Activated CD4-positive, alpha-beta T cell treated with anti-CD3 and anti-CD28 coated beads, Interleukin-2, amount 10 ng/mL, durations not matched to agents 24 days and 14 days (primary cell): ENCODE measurements at regions of chr1 and their contacts with region 1.

Region 1: GRCh38 chr1:34597877-34598514 is 156.9 kb upstream of the GJB5 start:
- DNase-seq: peak; percentile 87
- H3K4me3 Mint-ChIP-seq: no peak overlapping the region
- H3K27ac Mint-ChIP-seq: no peak overlapping the region
- H3K4me1 Mint-ChIP-seq: no peaks in the 10 kb centered on the region
- H3K27me3 Mint-ChIP-seq: peaks cover 2% of the 10 kb centered on the region

Region 2: GRCh38 chr1:34460193-34460592 is 137.8 kb before region 1 on chr1:
- intact Hi-C with region 1: loop called (anchors 2 kb)
- DNase-seq: peak; percentile 83
- H3K4me3 Mint-ChIP-seq: no peak overlapping the region
- H3K27ac Mint-ChIP-seq: no peak overlapping the region
- H3K4me1 Mint-ChIP-seq: no peaks in the 10 kb centered on the region
- H3K27me3 Mint-ChIP-seq: no peaks in the 10 kb centered on the region

Region 3: DNA sequence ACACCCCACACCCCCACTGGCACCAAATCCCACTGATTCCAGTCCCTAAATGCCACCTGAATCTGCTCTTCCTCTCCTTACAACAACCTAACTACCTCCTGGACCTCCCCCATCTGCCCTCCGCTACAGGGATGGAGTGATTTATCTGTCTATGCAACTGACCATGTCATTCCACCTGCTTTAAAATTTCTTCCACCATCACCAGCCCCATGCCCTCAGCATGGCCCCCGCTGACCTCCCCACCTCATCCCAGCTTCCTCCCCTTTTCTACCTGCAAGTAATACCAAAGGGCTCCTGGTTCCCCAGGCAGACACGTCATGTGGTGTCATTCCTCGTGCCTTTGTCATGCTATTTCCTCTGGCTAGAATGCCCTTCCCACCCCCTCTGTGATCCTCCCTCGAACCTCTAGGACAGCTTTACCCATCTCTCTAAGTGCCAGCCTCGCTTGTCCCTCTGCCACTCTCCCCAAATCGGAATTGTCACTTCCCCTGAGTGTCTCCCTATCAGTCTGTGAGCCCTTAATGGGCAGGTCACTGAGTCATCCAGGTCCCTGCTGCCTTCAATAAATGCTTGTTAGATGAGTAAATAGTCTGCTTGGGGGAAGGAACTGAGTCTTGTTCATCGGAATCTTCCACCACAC is 165.3 kb after region 1 on chr1:
- intact Hi-C with region 1: no loop called
- DNase-seq: no peak
- H3K4me3 Mint-ChIP-seq: no peak overlapping the region
- H3K27ac Mint-ChIP-seq: no peak overlapping the region
- H3K4me1 Mint-ChIP-seq: no peaks in the 10 kb centered on the region
- H3K27me3 Mint-ChIP-seq: no peaks in the 10 kb centered on the region